Right ventricle myocardium superior (tissue), 1 donor: ENCODE measurements at regions of chr22 and their contacts with region 1.

Region 1: DNA sequence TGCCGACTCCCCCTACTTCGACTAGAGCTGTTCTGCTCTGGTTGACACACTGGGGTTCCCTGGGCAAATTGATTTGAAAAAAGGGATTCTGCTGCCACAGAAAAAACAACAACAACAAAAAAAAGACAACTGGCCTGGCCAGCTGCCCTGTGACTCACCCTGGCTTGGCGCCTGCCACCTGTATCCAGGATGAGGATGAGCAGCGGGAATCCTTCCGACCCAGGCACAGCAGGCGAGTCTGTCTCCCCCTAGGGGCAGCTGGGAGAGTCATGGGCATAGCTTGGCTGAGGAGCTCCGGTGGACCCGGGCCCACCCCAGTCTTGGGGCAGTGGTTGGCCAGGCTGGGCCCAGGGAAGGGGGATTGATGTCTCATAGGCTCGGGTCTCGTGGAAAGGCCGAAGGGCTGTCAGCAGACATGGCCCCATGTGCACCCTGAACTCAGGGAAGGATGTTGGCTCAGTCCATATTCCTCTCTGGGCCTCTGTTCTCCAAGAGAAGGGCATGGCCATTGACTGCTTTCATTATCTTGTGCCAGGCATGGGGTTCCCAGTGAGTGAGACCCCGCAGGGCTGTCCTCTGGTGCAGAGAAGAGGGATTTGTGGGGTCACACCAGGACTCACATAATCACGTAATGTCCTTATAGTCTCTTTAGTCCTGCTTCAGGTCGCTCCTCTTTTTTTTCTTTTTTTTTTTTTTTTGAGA is 10.4 kb upstream of the SUN2 start:
- DNase-seq: peak; percentile 63
- ATAC-seq: peak; percentile 49

Region 2: DNA sequence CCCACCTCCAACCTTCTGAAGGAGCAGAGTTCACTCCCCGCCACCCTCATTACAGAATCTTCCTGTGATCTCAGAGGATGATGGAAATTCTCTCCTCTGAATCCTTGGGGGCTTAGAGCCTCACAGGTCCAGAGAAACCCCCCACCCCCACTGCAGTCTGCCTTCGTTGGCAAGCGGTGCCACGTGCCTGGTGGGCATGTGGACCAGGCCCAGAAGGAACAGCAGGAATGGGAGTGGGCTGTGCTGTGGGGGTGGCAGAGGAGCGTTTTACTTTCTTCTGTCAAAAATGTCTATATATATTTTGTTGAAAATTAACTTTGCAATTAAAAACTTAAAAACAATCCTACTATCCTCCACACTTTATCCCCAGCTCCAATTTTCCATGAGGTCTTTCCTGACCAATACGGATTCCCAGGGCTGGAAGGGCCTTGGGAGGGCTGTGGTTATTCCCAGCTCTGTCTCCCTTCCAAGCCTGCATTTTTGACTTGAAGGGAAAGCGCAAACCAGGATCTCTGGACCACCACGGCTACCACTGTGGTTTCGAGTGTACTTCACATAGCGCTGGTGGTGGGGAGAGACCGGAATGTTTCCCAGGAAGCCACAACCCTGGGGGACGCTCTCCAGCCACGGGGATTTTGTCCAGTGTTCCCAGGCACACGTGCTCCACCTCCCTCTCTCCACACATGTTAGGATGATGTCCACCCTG is 78.6 kb after region 1 on chr22:
- intact Hi-C with region 1: loop called (anchors 5 kb)
- DNase-seq: no peak
- ATAC-seq: no peak